Activated B cell treated with CpG ODN at 0.5 μM for 24 hours (primary cell): ENCODE measurements at regions of chr11 and their contacts with region 1.

Region 1: GRCh38 chr11:26753723-26754504 is 32.1 kb upstream of the SLC5A12 start:
- DNase-seq: no peak
- ATAC-seq: no peak
- H3K4me3 Mint-ChIP-seq: no peak overlapping the region
- H3K27ac Mint-ChIP-seq: no peak overlapping the region
- H3K4me1 Mint-ChIP-seq: no peaks in the 10 kb centered on the region
- H3K27me3 Mint-ChIP-seq: no peaks in the 10 kb centered on the region
- CTCF ChIP-seq: no peak

Region 2: DNA sequence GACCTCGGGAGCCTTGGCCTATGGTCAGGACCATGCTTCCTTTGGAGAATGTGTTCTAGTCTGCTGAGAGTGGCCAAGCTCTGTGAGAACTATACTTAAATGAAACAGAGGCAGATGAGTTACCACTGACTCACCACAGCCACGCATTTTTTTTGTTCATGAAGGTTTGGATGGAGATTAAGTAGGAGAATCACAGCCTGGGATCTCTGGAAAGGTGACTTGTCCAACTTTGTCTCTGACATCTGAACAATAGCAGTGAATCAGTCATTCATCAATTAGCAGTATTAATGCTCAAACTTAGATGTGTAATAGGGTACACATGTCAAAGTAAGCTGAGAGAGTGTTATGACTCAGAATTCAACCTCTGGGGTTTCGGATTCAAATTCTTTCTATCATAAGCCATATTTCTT is 522.7 kb before region 1 on chr11:
- CTCF ChIA-PET with region 1: no interaction called
- POLR2A ChIA-PET with region 1: no interaction called
- intact Hi-C with region 1: no loop called
- DNase-seq: no peak
- ATAC-seq: no peak
- H3K4me3 Mint-ChIP-seq: no peak overlapping the region
- H3K27ac Mint-ChIP-seq: no peak overlapping the region
- H3K4me1 Mint-ChIP-seq: peaks cover 4% of the 10 kb centered on the region
- H3K27me3 Mint-ChIP-seq: no peaks in the 10 kb centered on the region
- CTCF ChIP-seq: no peak

Region 3: GRCh38 chr11:26348756-26349155 is 405.2 kb before region 1 on chr11:
- CTCF ChIA-PET with region 1: no interaction called
- POLR2A ChIA-PET with region 1: no interaction called
- intact Hi-C with region 1: no loop called
- DNase-seq: no peak
- ATAC-seq: no peak
- H3K4me3 Mint-ChIP-seq: no peak overlapping the region
- H3K27ac Mint-ChIP-seq: no peak overlapping the region
- H3K4me1 Mint-ChIP-seq: no peaks in the 10 kb centered on the region
- H3K27me3 Mint-ChIP-seq: no peaks in the 10 kb centered on the region
- CTCF ChIP-seq: no peak

Region 4: GRCh38 chr11:26731081-26731451 is 22.8 kb before region 1 on chr11:
- CTCF ChIA-PET with region 1: no interaction called
- POLR2A ChIA-PET with region 1: no interaction called
- intact Hi-C with region 1: no loop called
- DNase-seq: no peak
- ATAC-seq: no peak
- H3K4me3 Mint-ChIP-seq: no peak overlapping the region
- H3K27ac Mint-ChIP-seq: no peak overlapping the region
- H3K4me1 Mint-ChIP-seq: no peaks in the 10 kb centered on the region
- H3K27me3 Mint-ChIP-seq: no peaks in the 10 kb centered on the region
- CTCF ChIP-seq: no peak

Region 5: DNA sequence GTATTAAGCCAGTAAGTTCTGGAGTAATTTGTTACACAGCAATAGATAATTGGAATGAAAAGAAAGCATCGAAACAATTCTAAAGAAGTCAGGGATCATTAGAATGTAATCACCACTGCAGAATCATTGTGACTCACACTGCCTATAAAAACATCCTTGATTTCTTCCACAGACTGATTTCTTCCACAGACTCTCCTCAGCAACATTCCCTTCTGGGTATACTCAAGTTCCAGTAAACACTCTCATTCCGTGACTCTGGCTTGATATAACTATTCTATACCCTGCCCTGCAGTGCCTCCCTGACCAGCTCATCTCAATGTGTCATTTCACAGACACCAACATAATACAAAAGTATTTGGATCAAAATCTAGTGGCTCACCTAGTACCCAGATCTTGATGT is 407.2 kb after region 1 on chr11:
- CTCF ChIA-PET with region 1: no interaction called
- POLR2A ChIA-PET with region 1: no interaction called
- intact Hi-C with region 1: loop called (anchors 10 kb)
- DNase-seq: no peak
- ATAC-seq: no peak
- H3K4me3 Mint-ChIP-seq: no peak overlapping the region
- H3K27ac Mint-ChIP-seq: no peak overlapping the region
- H3K4me1 Mint-ChIP-seq: no peaks in the 10 kb centered on the region
- H3K27me3 Mint-ChIP-seq: peaks cover 2% of the 10 kb centered on the region
- CTCF ChIP-seq: no peak

Region 6: GRCh38 chr11:27296497-27296896 is 542.6 kb after region 1 on chr11:
- CTCF ChIA-PET with region 1: no interaction called
- POLR2A ChIA-PET with region 1: no interaction called
- intact Hi-C with region 1: loop called (anchors 10 kb)
- DNase-seq: no peak
- ATAC-seq: peak; percentile 54
- H3K4me3 Mint-ChIP-seq: no peak overlapping the region
- H3K27ac Mint-ChIP-seq: no peak overlapping the region
- H3K4me1 Mint-ChIP-seq: no peaks in the 10 kb centered on the region
- H3K27me3 Mint-ChIP-seq: peaks cover 3% of the 10 kb centered on the region
- CTCF ChIP-seq: no peak